ENCODE measurements at regions of chr1 and their contacts with region 1.

Region 1: DNA sequence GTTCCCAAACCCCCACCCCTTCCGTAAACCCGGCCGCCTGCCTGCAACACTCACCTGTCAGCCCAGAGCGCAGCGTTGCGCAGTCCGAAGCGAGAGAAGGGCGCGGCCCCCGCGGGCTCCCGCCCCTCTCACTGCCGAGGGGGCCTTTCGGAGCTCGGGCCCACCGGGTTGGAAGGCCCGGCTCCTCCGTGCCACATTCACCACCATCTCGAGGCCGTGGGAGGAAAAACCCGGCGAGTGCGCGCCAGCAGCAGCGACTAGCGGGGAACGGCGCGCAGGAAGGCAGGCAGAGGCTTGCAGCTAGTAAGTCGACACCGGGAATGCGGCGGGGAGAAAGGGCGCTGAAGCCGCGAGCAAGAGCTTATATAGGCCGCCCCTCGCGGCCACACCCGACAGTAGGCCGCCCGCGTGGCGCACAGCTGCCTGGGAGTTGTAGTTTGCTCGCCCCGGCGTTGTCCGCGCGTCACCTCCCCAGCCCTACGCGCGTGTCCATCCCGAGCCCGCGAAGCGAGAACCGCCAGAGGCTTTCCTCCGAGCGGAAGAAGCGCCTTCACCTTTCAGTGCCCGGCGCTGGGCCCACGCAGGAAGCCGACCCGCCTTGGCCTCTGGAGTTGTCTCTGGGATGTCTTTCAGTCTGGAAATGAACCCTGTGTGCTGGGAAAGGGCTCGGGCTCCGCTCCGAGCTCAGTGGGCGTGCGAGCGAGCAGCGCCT is 10.4 kb upstream of the RAB42 start:
- DNase-seq: peak; percentile 94
- H3K4me3 Mint-ChIP-seq: peak overlapping the region; percentile 99
- H3K27ac Mint-ChIP-seq: peak overlapping the region; percentile 85
- H3K4me1 Mint-ChIP-seq: peaks cover 31% of the 10 kb centered on the region
- H3K27me3 Mint-ChIP-seq: no peaks in the 10 kb centered on the region

Region 2: GRCh38 chr1:28259307-28260167 is 322.2 kb before region 1 on chr1 and contains the start of gene SESN2:
- intact Hi-C with region 1: loop called (anchors 1 kb)
- DNase-seq: peak; percentile 99
- H3K4me3 Mint-ChIP-seq: peak within 1 kb of the TSS; percentile 82
- H3K27ac Mint-ChIP-seq: peak within 1 kb of the TSS; percentile 90
- H3K4me1 Mint-ChIP-seq: peaks cover 51% of the 10 kb centered on the region
- H3K27me3 Mint-ChIP-seq: no peaks in the 10 kb centered on the region
- total RNA-seq, gene SESN2: 18.7 and 19.3 TPM in 2 replicates

Region 3: DNA sequence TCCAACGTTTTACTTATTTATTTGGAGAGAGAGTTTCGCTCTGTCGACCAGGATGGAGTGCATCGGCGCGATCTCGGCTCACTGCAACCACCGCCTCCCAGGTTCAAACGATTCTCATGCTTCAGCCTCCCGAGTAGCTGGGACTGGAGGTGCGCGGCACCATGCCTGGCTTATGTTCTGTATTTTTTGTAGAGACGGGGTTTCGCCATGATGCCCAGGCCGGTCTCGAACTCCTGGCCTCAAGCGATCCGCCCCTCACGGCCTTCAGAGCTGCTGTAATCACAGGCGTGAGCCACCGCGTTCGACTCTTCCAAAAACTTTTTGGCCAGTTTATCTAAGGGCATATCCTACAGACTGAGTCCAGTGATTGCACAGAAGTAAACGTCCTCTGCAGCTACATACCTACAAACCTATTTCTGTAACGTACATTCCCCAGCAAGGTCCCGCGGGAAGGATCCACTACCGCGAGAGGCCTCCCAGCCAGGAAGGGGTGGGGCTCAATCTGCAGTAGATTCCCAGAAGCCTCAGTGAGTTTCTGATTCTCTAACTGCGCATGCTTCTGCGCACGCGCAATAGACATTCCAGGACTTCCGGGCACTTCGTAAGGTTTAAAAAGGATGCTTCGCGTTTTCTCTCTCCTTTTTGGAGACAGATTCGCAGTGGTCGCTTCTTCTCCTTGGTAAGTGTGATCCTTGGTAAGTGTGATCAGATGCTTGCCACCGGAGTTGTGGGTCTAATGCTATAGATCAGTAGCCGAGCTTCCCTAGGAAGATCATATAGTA is 76.1 kb before region 1 on chr1 and contains the start of gene RCC1:
- intact Hi-C with region 1: loop called (anchors 1 kb)
- DNase-seq: peak; percentile 96
- H3K4me3 Mint-ChIP-seq: peak within 1 kb of the TSS; percentile 100
- H3K27ac Mint-ChIP-seq: peak within 1 kb of the TSS; percentile 97
- H3K4me1 Mint-ChIP-seq: peaks cover 32% of the 10 kb centered on the region
- H3K27me3 Mint-ChIP-seq: peaks cover 7% of the 10 kb centered on the region
- total RNA-seq, gene RCC1: 130 and 135 TPM in 2 replicates

Region 4: GRCh38 chr1:28602536-28603439 is 21.1 kb after region 1 on chr1:
- intact Hi-C with region 1: loop called (anchors 1 kb)
- DNase-seq: no peak
- H3K4me3 Mint-ChIP-seq: no peak overlapping the region
- H3K27ac Mint-ChIP-seq: no peak overlapping the region
- H3K4me1 Mint-ChIP-seq: peaks cover 23% of the 10 kb centered on the region
- H3K27me3 Mint-ChIP-seq: no peaks in the 10 kb centered on the region

Region 5: DNA sequence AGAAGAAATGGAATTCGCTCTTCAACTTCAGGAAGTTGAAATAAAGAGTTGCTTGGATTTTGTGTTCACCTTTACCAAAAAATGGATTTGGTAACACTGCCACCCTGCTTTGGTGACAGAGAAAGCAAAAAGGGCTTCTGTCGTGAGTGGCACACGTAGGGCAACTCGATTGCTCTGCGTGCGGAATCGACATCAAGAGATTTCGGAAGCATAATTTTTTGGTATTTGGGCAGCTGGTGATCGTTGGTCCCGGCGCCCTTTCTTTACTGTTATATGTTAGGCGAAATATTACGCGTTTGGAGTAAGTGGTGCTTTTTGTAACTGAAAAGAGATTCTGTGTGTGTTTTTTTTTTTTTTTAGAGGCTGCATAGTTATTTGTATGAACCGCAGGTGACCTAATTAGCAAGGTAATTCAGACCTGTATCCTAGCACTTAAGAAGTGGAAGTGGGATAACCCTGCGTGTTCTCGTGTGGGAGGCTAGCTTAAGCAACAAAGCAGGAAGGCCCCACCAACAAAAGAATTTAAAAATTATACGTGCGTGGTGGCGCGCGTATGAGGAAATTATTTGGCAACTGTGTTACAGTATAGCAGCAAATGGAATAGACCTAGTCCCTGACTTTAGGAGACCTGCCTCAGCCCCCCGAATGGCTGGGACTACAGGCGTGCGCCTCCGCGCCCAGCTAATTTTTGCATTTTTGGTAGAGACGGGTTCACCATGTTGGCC is 66.9 kb after region 1 on chr1 and contains the start of gene RNU11:
- intact Hi-C with region 1: loop called (anchors 1 kb)
- DNase-seq: peak; percentile 86
- H3K4me3 Mint-ChIP-seq: peak within 1 kb of the TSS; percentile 92
- H3K27ac Mint-ChIP-seq: peak within 1 kb of the TSS; percentile 100
- H3K4me1 Mint-ChIP-seq: peaks cover 31% of the 10 kb centered on the region
- H3K27me3 Mint-ChIP-seq: peaks cover 2% of the 10 kb centered on the region
- total RNA-seq, gene RNU11: not detected in 2 replicates

Region 6: DNA sequence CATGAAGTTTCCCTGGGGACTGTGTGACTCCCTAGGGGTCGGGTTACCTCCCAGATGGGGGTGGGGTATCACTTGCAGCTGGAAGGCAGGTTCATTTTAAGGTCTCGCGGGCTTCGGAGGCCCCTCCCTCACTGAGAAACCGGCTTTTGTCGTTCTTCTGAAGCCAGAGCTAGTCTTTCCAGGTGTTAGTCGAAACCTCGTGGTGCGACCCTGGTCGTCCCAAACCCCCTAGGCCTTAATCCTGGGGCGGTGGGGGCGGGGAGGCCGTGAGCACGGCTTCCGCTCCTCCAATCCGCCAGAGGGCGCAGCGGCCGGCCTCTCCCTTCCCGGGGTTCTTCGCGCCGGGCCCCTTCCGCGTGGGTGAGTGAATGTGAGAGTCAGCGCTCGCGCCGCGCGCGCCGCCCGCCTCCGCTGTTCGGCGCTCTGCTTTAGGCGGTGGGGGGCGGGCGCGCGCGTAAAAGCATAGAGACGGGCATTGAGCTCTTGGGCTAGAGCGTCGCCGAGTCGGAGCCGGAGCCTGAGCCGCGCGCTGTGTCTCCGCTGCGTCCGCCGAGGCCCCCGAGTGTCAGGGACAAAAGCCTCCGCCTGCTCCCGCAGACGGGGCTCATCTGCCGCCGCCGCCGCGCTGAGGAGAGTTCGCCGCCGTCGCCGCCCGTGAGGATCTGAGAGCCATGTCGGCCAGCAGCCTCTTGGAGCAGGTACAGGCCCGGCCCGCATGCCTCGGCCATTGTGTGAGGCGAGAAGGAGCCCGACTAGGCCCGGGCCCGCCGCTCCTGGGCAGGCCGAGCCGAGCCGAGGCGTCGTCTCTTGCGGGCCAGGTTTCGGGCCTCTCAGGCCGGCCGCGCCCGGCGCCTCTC is 155.0 kb after region 1 on chr1 and contains the start of gene YTHDF2:
- intact Hi-C with region 1: loop called (anchors 2 kb)
- DNase-seq: peak; percentile 96
- H3K4me3 Mint-ChIP-seq: peak within 1 kb of the TSS; percentile 96
- H3K27ac Mint-ChIP-seq: peak within 1 kb of the TSS; percentile 93
- H3K4me1 Mint-ChIP-seq: peaks cover 27% of the 10 kb centered on the region
- H3K27me3 Mint-ChIP-seq: no peaks in the 10 kb centered on the region
- total RNA-seq, gene YTHDF2: 91.7 and 94.9 TPM in 2 replicates